Activated T-helper 2 cell treated with anti-CD3 and anti-CD28 coated beads, Interferon-gamma antibody, Interleukin-2, Interleukin-4, amounts not matched to agents 10 μg/mL and 5 μg/mL and 100 μg/mL, durations not matched to agents 14 hours and 24 hours and 36 hours (primary cell): ENCODE measurements at regions of chr11 and their contacts with region 1.

Region 1: GRCh38 chr11:121292495-121293287 is at the start of gene SC5D:
- DNase-seq: peak; percentile 92
- H3K4me3 Mint-ChIP-seq: peak within 1 kb of the TSS; percentile 88
- H3K27ac Mint-ChIP-seq: peak within 1 kb of the TSS; percentile 87
- H3K4me1 Mint-ChIP-seq: peaks cover 36% of the 10 kb centered on the region
- H3K27me3 Mint-ChIP-seq: peaks cover 9% of the 10 kb centered on the region
- total RNA-seq, gene SC5D: 23.2 and 28.0 TPM in 2 replicates

Region 2: DNA sequence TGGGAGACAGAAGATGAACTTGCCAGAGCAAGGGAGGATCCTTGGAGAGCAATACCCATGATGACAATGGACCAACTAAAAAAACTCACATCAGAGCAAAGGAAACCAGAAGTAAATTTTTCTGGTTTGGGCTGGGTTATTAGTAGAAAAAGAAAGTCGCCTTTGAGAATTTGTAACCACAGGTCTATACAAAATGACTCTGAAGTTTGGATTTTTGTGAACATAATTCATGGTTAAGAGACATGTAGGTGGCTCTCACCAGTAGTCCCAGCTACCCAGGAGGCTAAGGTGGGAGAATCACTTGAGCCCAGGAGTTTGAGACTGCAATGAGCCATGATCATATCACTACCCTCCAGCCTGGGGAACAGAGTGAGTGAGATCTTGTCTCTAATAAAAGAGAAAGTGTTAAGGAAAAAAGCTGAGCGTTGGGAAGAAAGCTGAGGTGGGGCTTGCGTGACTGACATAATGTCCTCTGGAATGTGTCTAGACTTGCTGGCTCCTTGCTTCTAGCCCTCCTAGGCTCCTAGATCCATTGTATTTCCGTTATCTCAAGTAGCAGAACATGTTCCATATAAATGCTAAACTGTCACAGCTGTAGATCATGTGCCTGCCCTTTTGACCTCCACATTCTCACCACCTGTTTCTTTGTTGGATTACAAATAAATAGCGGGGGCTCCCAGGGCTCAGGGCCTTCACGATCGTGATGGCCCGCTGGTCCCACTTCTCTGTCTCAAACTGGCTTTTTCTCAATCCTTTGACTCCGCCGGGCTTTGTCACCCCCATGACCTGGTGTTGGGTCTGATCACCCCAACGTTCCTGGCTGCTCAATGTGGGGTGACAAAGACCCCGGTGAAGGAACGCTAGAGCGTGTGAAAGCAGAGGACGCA is 56.3 kb before region 1 on chr11:
- intact Hi-C with region 1: loop called (anchors 5 kb)
- DNase-seq: no peak
- H3K4me3 Mint-ChIP-seq: no peak overlapping the region
- H3K27ac Mint-ChIP-seq: peak overlapping the region; percentile 15
- H3K4me1 Mint-ChIP-seq: peaks cover 29% of the 10 kb centered on the region
- H3K27me3 Mint-ChIP-seq: peaks cover 23% of the 10 kb centered on the region

Region 3: DNA sequence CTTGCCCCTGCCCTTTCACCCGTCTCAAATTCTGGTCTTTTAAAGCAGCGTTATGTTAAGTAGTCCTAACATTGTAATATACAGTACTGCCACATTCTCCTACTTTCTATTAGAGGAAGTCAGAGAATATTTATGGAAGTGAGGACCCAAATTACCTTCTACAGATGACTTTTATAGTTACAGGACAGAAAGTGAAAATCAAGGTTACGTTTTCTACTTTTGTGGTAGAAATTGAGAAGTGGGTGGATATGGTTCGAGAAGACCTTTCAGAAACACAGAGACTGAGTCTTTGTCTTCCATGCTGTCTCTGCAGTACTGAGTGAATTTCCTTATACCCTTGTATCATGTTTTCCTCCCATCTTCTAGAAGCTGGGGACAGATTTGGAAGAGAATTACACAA is 17.0 kb after region 1 on chr11:
- intact Hi-C with region 1: loop called (anchors 2 kb)
- DNase-seq: no peak
- H3K4me3 Mint-ChIP-seq: no peak overlapping the region
- H3K27ac Mint-ChIP-seq: no peak overlapping the region
- H3K4me1 Mint-ChIP-seq: peaks cover 23% of the 10 kb centered on the region
- H3K27me3 Mint-ChIP-seq: no peaks in the 10 kb centered on the region

Region 4: GRCh38 chr11:121334973-121335710 is 42.5 kb after region 1 on chr11:
- intact Hi-C with region 1: no loop called
- DNase-seq: no peak
- H3K4me3 Mint-ChIP-seq: no peak overlapping the region
- H3K27ac Mint-ChIP-seq: no peak overlapping the region
- H3K4me1 Mint-ChIP-seq: peaks cover 20% of the 10 kb centered on the region
- H3K27me3 Mint-ChIP-seq: peaks cover 16% of the 10 kb centered on the region

Region 5: GRCh38 chr11:121406291-121406690 is 113.6 kb after region 1 on chr11:
- intact Hi-C with region 1: no loop called
- DNase-seq: no peak
- H3K4me3 Mint-ChIP-seq: no peak overlapping the region
- H3K27ac Mint-ChIP-seq: no peak overlapping the region
- H3K4me1 Mint-ChIP-seq: peaks cover 3% of the 10 kb centered on the region
- H3K27me3 Mint-ChIP-seq: peaks cover 2% of the 10 kb centered on the region

Region 6: GRCh38 chr11:121655537-121656327 is 363.0 kb after region 1 on chr11:
- intact Hi-C with region 1: no loop called
- DNase-seq: peak; percentile 55
- H3K4me3 Mint-ChIP-seq: peak overlapping the region; percentile 77
- H3K27ac Mint-ChIP-seq: peak overlapping the region; percentile 34
- H3K4me1 Mint-ChIP-seq: peaks cover 16% of the 10 kb centered on the region
- H3K27me3 Mint-ChIP-seq: peaks cover 27% of the 10 kb centered on the region